GM10248 (cell line): ENCODE measurements at regions of chr7 and their contacts with region 1.

Region 1: GRCh38 chr7:156949541-156950380 is at the start of gene NOM1:
- DNase-seq: peak; percentile 98
- CTCF ChIP-seq: peak; percentile 95

Region 2: DNA sequence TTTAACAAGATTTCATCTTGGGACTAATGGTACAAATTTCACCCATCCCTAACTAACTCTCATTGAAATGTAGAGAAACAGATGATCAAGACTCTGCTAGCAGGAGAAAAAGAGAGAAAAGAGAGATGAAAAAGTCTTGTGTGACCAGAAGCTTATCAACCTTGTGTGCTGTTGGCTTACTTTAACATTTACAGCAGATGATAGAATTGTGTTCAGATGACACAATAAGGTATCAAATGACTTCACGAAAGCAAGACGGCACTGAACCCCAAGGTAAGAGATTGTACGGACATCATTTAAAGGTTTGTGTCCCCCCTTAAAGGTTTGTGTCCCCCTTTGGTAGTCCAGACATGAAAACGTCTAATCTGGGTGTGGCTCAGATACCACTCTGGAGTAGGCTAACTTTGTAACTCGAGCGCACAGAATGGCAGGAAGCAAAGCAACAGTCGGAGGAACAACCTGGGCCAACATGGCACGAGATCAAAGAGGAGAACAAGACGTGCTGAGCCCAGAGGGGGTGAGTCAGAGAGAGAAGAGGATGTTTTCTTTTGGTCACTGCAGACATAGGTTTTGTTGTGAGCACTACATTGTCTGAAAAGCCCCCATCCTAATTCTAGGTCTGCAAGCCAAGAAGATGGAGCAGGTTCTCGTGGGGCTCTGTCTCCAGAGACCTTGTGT is 46.4 kb before region 1 on chr7:
- CTCF ChIA-PET with region 1: interaction called, 12 read pairs
- POLR2A ChIA-PET with region 1: no interaction called
- DNase-seq: no peak
- CTCF ChIP-seq: no peak

Region 3: DNA sequence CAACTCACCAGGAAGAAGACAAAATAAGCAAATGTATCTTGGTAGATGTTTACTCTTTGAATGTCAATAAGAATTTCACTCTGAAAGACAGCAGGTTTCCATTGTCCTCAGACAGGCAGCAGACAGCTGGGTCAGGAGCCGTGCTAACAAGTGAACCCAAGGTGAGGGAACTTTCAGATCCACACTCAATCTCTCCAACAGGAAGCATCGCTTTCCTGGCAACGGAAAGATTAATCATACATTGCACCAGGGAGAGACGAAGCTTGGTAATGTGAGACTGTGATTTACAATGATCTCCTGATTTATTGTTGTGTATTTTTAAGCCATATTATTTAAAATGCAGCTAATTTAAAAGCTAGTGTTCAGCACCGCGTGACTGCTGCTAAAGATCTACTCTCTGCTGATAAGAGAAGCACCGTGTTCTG is 17.8 kb before region 1 on chr7:
- CTCF ChIA-PET with region 1: interaction called, 12 read pairs
- POLR2A ChIA-PET with region 1: no interaction called
- DNase-seq: no peak
- CTCF ChIP-seq: no peak

Region 4: DNA sequence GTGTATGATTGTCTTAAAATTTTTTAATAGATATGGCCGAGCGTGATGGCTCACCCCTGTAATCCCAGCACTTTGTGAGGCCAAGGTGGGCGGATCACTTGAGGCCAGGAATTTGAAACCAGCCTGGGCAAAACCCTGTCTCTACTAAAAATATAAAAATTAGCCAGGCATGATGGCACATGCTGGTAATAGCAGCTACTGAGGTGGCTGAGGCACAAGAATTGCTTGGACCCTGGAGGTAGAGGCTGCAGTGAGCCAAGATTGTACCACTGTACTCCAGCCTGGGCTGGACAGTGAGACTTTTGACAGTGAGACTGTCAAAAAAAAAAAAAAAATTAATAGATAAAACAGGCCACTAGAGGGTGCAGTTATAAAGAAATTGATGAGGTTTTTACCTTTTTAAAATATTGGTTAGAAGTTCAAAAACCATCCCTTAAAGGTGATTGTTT is 20.2 kb after region 1 on chr7:
- CTCF ChIA-PET with region 1: interaction called, 23 read pairs
- POLR2A ChIA-PET with region 1: no interaction called
- DNase-seq: no peak
- CTCF ChIP-seq: peak; percentile 0

Region 5: GRCh38 chr7:156999611-157000046 is 49.9 kb after region 1 on chr7:
- CTCF ChIA-PET with region 1: no interaction called
- POLR2A ChIA-PET with region 1: no interaction called
- DNase-seq: no peak
- CTCF ChIP-seq: no peak

Region 6: DNA sequence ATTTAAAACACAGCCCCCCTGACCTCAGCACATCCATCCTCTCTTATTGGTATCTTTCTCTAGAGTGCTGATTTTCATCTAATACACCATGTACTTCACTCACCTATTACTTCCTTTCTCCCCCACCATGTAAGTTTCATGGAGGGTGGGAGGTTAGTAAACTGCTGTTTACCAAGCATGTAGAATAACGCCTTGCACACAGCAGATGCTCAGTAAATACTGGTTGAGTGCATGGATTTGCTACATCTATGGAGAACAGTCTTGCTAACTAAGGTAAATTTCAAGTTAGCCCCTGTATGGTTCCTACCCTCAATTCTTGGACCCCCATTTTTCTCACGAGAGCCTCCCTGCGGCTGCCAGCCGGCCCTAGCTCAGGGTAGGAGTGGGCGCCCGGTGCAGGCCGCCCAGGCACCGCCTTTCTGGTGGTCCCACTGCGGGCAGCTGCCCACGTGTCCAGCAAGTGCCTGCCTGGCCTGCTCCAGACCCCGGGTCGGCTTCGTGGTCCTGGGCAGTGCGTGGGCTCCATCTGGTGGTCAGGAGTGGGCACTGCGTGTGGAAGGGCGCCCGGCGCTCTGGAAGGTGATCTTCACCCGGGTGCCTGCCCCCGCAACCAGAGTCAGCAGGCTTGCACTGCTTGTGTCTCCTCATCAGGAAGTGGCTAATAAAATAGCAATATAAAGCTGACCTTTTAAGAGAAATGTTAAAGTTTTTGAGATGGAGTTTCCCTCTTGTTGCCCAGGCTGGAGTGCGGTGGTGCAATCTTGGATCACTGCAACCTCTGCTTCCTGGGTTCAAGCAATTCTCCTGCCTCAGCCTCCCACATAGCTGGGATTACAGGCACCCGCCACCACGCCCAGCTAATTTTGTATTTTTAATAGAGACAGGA is 323.7 kb after region 1 on chr7:
- CTCF ChIA-PET with region 1: interaction called, 20 read pairs
- POLR2A ChIA-PET with region 1: no interaction called
- DNase-seq: peak; percentile 90
- CTCF ChIP-seq: peak; percentile 96